ENCODE measurements at regions of chr3 and their contacts with region 1.

Region 1: GRCh38 chr3:106255870-106256248 is 387.0 kb upstream of the CBLB start:
- DNase-seq: no peak
- ATAC-seq: no peak
- H3K4me3 ChIP-seq: no peak overlapping the region
- H3K27ac ChIP-seq: no peak overlapping the region
- H3K4me1 ChIP-seq: 0 out of 2 replicates have a peak, but pooled peaks cover 4% of the 10 kb centered on the region
- H3K27me3 ChIP-seq: no peaks in the 10 kb centered on the region
- CTCF ChIP-seq: no peak

Region 2: DNA sequence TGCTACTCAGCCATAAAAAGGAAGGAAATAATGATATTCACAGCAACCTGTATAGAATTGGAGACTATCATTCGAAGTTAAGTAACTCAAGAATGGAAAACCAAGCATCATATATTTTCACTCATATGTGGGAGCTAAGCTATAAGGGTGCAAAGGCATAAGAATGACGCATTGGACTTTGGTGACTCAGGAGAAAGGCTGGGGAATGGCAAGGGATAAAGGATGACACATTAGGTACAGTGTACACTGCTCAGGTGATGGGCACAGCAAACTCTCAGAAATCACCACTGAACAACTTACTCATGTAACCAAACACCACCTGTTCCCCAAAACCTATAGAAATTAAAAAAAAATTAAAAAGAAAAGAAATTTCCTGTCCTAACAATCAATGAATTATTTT is 846.5 kb before region 1 on chr3:
- CTCF ChIA-PET with region 1: no interaction called
- POLR2A ChIA-PET with region 1: no interaction called
- intact Hi-C with region 1: no loop called
- DNase-seq: peak; percentile 83
- ATAC-seq: peak; percentile 81
- H3K4me3 ChIP-seq: no peak overlapping the region
- H3K27ac ChIP-seq: peak overlapping the region; percentile 44
- H3K4me1 ChIP-seq: peaks cover 5% of the 10 kb centered on the region; the same call in 1 of the 2 replicates
- H3K27me3 ChIP-seq: no peaks in the 10 kb centered on the region
- CTCF ChIP-seq: no peak

Region 3: GRCh38 chr3:106204160-106204868 is 51.5 kb before region 1 on chr3:
- CTCF ChIA-PET with region 1: no interaction called
- POLR2A ChIA-PET with region 1: no interaction called
- intact Hi-C with region 1: no loop called
- DNase-seq: peak; percentile 12
- ATAC-seq: no peak
- H3K4me3 ChIP-seq: no peak overlapping the region
- H3K27ac ChIP-seq: no peak overlapping the region
- H3K4me1 ChIP-seq: no peaks in the 10 kb centered on the region
- H3K27me3 ChIP-seq: no peaks in the 10 kb centered on the region
- CTCF ChIP-seq: no peak

Region 4: GRCh38 chr3:106345353-106346027 is 89.6 kb after region 1 on chr3:
- CTCF ChIA-PET with region 1: no interaction called
- POLR2A ChIA-PET with region 1: interaction called, 17 read pairs
- intact Hi-C with region 1: no loop called
- DNase-seq: peak; percentile 92
- ATAC-seq: peak; percentile 87
- H3K4me3 ChIP-seq: no peak overlapping the region
- H3K27ac ChIP-seq: peak overlapping the region; percentile 83
- H3K4me1 ChIP-seq: peaks cover 23% of the 10 kb centered on the region
- H3K27me3 ChIP-seq: no peaks in the 10 kb centered on the region
- CTCF ChIP-seq: no peak

Measured in PC-3 (cell line).